ENCODE measurements at regions of chr1 and their contacts with region 1.

Region 1: DNA sequence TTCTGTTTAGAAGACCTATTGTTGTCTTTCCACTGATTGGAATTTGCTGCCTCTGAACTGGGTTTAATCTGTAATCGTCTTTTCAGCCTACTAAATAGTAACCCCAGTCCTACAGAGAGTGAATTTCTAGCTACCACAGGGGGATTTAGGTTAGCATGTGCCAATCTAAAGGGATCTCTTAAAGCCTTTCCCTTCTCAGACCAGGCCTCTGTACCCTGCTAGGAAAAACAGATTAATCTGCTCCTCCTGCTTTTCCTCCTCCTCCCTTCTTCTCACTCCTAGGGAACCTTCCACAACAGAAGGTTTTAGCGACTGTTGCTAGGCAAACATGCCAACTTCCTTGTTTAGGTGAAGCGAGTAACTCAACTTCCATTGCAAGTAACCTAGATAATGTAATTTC is 1.3 kb upstream of the RC3H1 start:
- DNase-seq: peak in 1 of 35 experiments; percentile 14
- ATAC-seq: no peak
- H3K4me3 ChIP-seq: no peak overlapping the region
- H3K4me3 Mint-ChIP-seq: peak overlapping the region; percentile 94 to 99 (median 98)
- H3K27ac ChIP-seq: no peak overlapping the region
- H3K27ac Mint-ChIP-seq: peak overlapping the region; percentile 95 to 97
- H3K4me1 ChIP-seq: peaks cover 14 to 33% of the 10 kb centered on the region in 2 experiments
- H3K4me1 Mint-ChIP-seq: peaks cover 35 to 43% (median 39%) of the 10 kb centered on the region in 3 donors
- H3K27me3 ChIP-seq: no peaks in the 10 kb centered on the region
- H3K27me3 Mint-ChIP-seq: peaks cover 0 to 4% of the 10 kb centered on the region in 2 donors

Region 2: DNA sequence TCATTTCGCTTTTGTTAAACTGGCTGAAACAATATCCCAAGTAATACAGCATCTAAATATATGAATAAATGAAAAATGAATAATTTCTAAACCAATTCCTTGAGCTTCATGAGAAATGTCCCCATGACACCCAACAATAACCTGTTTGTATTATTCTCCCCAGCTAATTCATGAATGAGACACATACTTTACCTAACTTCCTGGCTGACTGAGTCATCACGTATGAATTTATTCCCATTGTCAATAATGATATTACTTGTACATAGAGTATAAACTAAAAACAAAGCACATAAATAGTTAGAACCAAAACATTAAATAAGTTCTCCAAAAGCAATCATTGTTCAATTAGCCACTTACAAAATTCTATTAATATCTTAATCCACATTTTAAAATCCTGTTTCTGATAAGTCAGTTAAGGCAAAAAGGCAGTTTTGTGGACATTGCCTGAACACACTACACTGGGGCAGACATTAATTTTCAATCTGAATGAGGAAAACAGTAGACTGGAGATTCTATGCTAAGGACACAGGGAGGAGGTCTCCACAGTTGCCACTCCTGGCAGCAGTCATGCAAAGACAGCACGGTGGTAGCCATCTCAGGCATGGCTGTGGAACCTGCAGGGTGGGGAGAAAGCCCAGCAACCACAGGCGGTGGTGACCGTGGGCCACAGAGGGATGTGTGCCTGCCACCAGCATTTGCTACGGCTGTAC is 468.7 kb before region 1 on chr1:
- CTCF ChIA-PET with region 1: no interaction called
- POLR2A ChIA-PET with region 1: no interaction called
- DNase-seq: no peak
- ATAC-seq: no peak
- H3K4me3 ChIP-seq: no peak overlapping the region
- H3K4me3 Mint-ChIP-seq: no peak overlapping the region
- H3K27ac ChIP-seq: no peak overlapping the region
- H3K27ac Mint-ChIP-seq: peak overlapping the region in 1 of 2 donors; percentile 94
- H3K4me1 ChIP-seq: peaks cover 14 to 26% of the 10 kb centered on the region in 2 experiments
- H3K4me1 Mint-ChIP-seq: peaks cover 37 to 69% (median 52%) of the 10 kb centered on the region in 3 donors
- H3K27me3 ChIP-seq: no peaks in the 10 kb centered on the region
- H3K27me3 Mint-ChIP-seq: no peaks in the 10 kb centered on the region

Region 3: GRCh38 chr1:174051956-174052355 is 28.5 kb after region 1 on chr1:
- CTCF ChIA-PET with region 1: no interaction called
- POLR2A ChIA-PET with region 1: interaction called in 1 of 2 experiments, 12 read pairs
- DNase-seq: no peak
- ATAC-seq: no peak
- H3K4me3 ChIP-seq: no peak overlapping the region
- H3K4me3 Mint-ChIP-seq: no peak overlapping the region
- H3K27ac ChIP-seq: no peak overlapping the region
- H3K27ac Mint-ChIP-seq: no peak overlapping the region
- H3K4me1 ChIP-seq: no peaks in the 10 kb centered on the region
- H3K4me1 Mint-ChIP-seq: peaks cover 0 to 2% (median 0%) of the 10 kb centered on the region in 3 donors
- H3K27me3 ChIP-seq: peaks cover 0 to 12% of the 10 kb centered on the region in 2 experiments
- H3K27me3 Mint-ChIP-seq: peaks cover 0 to 2% of the 10 kb centered on the region in 2 donors

Measured in T-cell (primary cell).